ENCODE measurements at regions of chr11 and their contacts with region 1.

Region 1: DNA sequence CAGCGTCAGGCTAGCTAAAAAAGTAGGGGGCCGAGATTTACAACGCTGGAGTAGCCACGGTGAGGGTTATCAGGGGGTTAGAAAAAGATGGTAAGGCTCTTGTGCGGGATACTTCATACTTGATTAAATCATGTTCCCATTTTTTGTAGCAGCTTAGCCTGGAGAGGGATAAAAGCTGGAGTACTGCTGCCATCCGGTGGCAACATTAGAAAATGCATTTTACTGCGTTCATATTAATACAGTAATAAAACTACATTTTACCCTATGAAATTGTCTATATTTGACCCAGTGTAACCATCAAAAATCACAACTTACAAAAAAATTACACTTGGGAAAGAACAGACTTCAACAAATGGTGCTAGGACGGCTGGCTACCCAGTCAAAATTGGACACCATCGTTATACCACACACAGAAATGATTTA is 17.3 kb downstream of the RPUSD4 start:
- DNase-seq: no peak
- H3K4me3 ChIP-seq: no peak overlapping the region
- H3K27ac ChIP-seq: no peak overlapping the region
- H3K4me1 ChIP-seq: peaks cover 17% of the 10 kb centered on the region
- H3K27me3 ChIP-seq: no peaks in the 10 kb centered on the region
- CTCF ChIP-seq: peak; percentile 72

Region 2: GRCh38 chr11:125923012-125923579 is 271.0 kb before region 1 on chr11:
- intact Hi-C with region 1: loop called (anchors 5 kb)
- DNase-seq: peak; percentile 36
- H3K4me3 ChIP-seq: no peak overlapping the region
- H3K27ac ChIP-seq: no peak overlapping the region
- H3K4me1 ChIP-seq: no peaks in the 10 kb centered on the region
- H3K27me3 ChIP-seq: peaks cover 31% of the 10 kb centered on the region
- CTCF ChIP-seq: peak; percentile 88

Region 3: GRCh38 chr11:126062679-126063506 is 131.2 kb before region 1 on chr11 and contains the start of gene CDON:
- intact Hi-C with region 1: loop called (anchors 10 kb)
- DNase-seq: peak; percentile 91
- H3K4me3 ChIP-seq: peak within 1 kb of the TSS; percentile 82
- H3K27ac ChIP-seq: peak within 1 kb of the TSS; percentile 71
- H3K4me1 ChIP-seq: peaks cover 15% of the 10 kb centered on the region
- H3K27me3 ChIP-seq: no peaks in the 10 kb centered on the region
- CTCF ChIP-seq: no peak
- total RNA-seq, gene CDON: 9.9 TPM

Measured in left ventricle myocardium inferior (tissue), 1 donor.